ENCODE measurements at regions of chr16 and their contacts with region 1.

Region 1: GRCh38 chr16:9033125-9033830 is 58.2 kb upstream of the HAPSTR1 start:
- DNase-seq: peak; percentile 41
- H3K4me3 ChIP-seq: no peak overlapping the region
- H3K27ac ChIP-seq: no peak overlapping the region
- H3K4me1 ChIP-seq: no peaks in the 10 kb centered on the region
- H3K27me3 ChIP-seq: no peaks in the 10 kb centered on the region
- CTCF ChIP-seq: peak; percentile 26 to 70
- POLR2A ChIP-seq: no peak

Region 2: GRCh38 chr16:8982816-8983215 is 50.5 kb before region 1 on chr16:
- CTCF ChIA-PET with region 1: no interaction called
- POLR2A ChIA-PET with region 1: no interaction called
- dilution Hi-C with region 1: no loop called
- intact Hi-C with region 1: no loop called
- DNase-seq: no peak
- H3K4me3 ChIP-seq: no peak overlapping the region
- H3K27ac ChIP-seq: no peak overlapping the region
- H3K4me1 ChIP-seq: no peaks in the 10 kb centered on the region
- H3K27me3 ChIP-seq: no peaks in the 10 kb centered on the region
- CTCF ChIP-seq: no peak
- POLR2A ChIP-seq: no peak

Region 3: DNA sequence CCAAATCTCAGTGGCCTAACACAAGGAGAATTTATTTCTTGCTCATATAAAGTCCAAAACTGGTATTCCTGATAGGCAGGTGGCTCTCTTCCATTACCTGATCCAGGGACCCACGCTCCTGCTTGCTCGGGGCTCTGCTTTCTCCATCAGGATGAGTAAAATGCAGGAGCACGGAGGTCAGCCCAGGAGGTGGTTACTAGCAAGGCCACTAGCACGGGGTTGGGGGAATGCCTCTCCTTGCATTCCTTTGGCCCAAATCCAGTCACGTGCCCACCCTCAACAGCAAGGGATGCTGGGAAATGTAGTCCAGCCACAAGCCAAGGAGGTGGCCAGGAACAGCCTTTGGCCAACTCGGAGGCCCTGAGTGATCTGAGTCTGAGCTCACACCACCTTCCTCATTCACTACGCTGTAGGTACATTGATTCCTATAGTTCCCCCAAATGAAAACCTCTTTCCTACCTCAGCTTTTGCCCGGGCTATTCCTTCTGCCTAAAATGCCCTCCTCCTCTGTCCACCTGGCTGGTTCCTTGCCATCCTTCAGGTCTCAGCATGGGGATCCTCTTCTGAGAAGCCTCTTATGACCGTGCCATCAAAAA is 19.8 kb after region 1 on chr16:
- CTCF ChIA-PET with region 1: interaction called, 32 read pairs
- POLR2A ChIA-PET with region 1: no interaction called
- dilution Hi-C with region 1: no loop called
- intact Hi-C with region 1: no loop called
- DNase-seq: peak; percentile 70
- H3K4me3 ChIP-seq: no peak overlapping the region
- H3K27ac ChIP-seq: no peak overlapping the region
- H3K4me1 ChIP-seq: peaks cover 4% of the 10 kb centered on the region
- H3K27me3 ChIP-seq: no peaks in the 10 kb centered on the region
- CTCF ChIP-seq: no peak
- POLR2A ChIP-seq: no peak

Region 4: GRCh38 chr16:9079430-9079812 is 46.1 kb after region 1 on chr16:
- CTCF ChIA-PET with region 1: interaction called, 3 read pairs
- POLR2A ChIA-PET with region 1: no interaction called
- dilution Hi-C with region 1: no loop called
- intact Hi-C with region 1: loop called (anchors 2 kb)
- DNase-seq: no peak
- H3K4me3 ChIP-seq: no peak overlapping the region
- H3K27ac ChIP-seq: peak overlapping the region; percentile 41
- H3K4me1 ChIP-seq: peaks cover 5% of the 10 kb centered on the region
- H3K27me3 ChIP-seq: no peaks in the 10 kb centered on the region
- CTCF ChIP-seq: no peak
- POLR2A ChIP-seq: no peak

Region 5: DNA sequence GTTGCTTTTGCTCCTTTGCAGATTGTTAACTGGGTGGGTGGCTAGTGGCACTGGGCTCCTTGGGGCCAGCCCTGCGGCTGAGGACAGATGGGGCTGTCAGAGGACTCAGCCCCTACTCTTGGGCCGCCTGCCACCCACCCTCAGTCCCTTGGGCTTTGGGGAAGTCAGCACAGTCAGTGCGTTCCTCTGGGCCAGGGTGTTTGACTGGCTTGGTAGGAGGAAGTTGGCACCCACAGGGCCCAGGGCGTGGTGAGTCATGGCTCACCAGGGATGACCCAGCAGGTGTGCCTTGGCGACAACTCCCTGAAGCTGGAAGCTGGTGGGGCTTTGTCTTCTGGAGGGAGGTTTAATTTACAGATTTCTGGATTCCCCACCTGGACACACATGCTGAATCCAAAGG is 90.6 kb after region 1 on chr16:
- CTCF ChIA-PET with region 1: no interaction called
- POLR2A ChIA-PET with region 1: no interaction called
- dilution Hi-C with region 1: no loop called
- intact Hi-C with region 1: no loop called
- DNase-seq: no peak
- H3K4me3 ChIP-seq: no peak overlapping the region
- H3K27ac ChIP-seq: no peak overlapping the region
- H3K4me1 ChIP-seq: peaks cover 20% of the 10 kb centered on the region
- H3K27me3 ChIP-seq: no peaks in the 10 kb centered on the region
- CTCF ChIP-seq: no peak
- POLR2A ChIP-seq: no peak

Measured in endothelial cell of umbilical vein (primary cell).